CD8-positive, alpha-beta T cell (primary cell): ENCODE measurements at regions of chr11 and their contacts with region 1.

Region 1: DNA sequence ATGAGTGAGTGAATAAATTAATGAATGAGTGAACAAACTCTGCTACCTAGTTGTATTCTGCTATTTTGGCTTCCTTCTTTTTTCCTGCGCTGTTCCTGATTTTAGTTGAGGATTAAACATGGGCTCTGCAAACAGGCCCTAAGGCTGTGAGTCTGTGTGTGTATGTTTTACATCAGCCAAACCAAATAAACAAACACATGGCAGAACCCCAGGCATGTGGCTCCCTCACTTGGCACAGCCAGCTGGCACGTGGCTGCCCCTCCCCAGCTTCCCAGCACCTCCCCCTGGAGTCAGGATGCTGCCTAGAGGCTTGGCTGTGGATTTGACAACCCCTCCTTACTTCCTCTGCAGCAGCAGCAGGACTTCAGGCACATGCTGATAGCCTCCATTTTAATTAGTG is 593.2 kb downstream of the INSC start:
- DNase-seq: no peak
- ATAC-seq: no peak
- H3K4me3 ChIP-seq: no peak overlapping the region
- H3K4me3 Mint-ChIP-seq: no peak overlapping the region
- H3K27ac ChIP-seq: no peak overlapping the region
- H3K27ac Mint-ChIP-seq: no peak overlapping the region
- H3K4me1 ChIP-seq: no peaks in the 10 kb centered on the region
- H3K4me1 Mint-ChIP-seq: no peaks in the 10 kb centered on the region
- H3K27me3 ChIP-seq: no peaks in the 10 kb centered on the region
- H3K27me3 Mint-ChIP-seq: no peaks in the 10 kb centered on the region
- CTCF ChIP-seq: no peak

Region 2: DNA sequence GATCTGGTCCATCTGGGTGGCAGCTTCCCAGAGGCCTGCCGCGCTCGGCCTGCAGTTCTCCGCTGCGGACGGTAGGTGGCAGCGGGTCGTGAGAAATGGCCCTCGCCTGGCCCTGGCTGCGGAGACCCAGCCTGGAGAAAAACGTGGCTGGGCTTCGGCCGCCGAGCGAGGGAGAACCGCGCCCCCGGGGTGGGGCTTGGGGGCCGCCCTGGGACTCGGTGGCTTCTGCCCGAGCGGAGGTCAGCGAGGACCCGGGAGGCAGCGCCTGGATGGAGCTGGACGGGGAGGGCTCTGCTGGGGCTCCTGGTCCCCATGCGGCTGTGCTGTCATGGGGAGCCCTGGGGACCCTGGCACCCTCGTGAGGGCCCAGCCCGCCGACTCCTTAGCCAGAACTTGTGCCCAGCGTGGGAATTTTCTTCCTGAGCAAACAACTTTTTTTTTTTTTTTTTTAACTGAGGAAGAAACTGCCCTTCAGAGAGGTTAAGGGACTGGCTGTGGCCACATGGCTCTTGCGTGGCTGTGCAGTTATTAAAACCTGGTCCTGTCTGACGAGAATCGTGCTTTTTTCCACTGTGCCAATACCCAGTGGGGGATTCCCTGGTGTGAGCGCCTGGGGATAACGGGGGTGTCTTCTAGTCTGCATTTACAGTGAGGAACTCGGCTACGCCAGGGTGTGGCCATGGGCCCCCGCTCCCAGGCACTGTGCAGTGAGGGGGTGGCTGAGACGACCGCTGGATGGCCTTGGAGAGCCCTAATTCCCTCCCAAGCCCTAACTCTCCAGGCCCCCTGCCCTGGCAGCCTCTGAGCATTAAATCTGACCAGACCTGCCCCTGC is 57.6 kb before region 1 on chr11:
- CTCF ChIA-PET with region 1: no interaction called
- POLR2A ChIA-PET with region 1: no interaction called
- intact Hi-C with region 1: no loop called
- DNase-seq: peak; percentile 30 to 66 (median 53)
- ATAC-seq: peak; percentile 87
- H3K4me3 ChIP-seq: peak overlapping the region in 1 of 2 experiments; percentile 35
- H3K4me3 Mint-ChIP-seq: no peak overlapping the region
- H3K27ac ChIP-seq: no peak overlapping the region
- H3K27ac Mint-ChIP-seq: no peak overlapping the region
- H3K4me1 ChIP-seq: peaks cover 7% of the 10 kb centered on the region
- H3K4me1 Mint-ChIP-seq: peaks cover 2% of the 10 kb centered on the region
- H3K27me3 ChIP-seq: peaks cover 4 to 9% of the 10 kb centered on the region in 2 experiments
- H3K27me3 Mint-ChIP-seq: peaks cover 15% of the 10 kb centered on the region
- CTCF ChIP-seq: peak; percentile 62

Region 3: DNA sequence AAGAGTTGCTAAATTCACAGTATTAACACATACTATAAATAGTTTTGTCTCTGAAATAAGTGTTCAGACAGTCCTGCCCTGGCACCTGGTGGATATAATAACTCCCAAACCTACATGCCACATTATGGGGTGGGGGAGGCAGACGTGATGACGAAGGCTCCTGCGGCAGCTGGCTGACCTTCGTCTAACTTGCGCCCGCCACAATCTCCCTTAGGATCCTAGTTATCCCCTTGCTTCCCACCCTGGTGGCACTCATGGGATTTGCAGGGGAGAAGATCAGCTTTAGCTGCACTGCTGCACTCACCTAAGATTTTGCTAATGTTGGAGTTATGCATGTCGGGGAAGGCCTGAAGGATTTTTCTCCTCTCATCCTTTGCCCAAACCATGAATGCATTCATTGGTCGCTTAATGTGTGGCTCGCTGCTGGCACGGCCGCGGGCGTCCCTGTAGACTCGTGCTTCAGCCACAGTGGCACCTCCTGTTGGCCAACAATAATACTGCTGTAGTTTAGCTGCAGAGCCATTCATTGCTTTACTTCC is 280.8 kb after region 1 on chr11:
- CTCF ChIA-PET with region 1: no interaction called
- POLR2A ChIA-PET with region 1: no interaction called
- intact Hi-C with region 1: loop called in 1 of 2 experiments (anchors 10 kb)
- DNase-seq: no peak
- ATAC-seq: no peak
- H3K4me3 ChIP-seq: no peak overlapping the region
- H3K4me3 Mint-ChIP-seq: no peak overlapping the region
- H3K27ac ChIP-seq: no peak overlapping the region
- H3K27ac Mint-ChIP-seq: no peak overlapping the region
- H3K4me1 ChIP-seq: no peaks in the 10 kb centered on the region
- H3K4me1 Mint-ChIP-seq: no peaks in the 10 kb centered on the region
- H3K27me3 ChIP-seq: no peaks in the 10 kb centered on the region
- H3K27me3 Mint-ChIP-seq: no peaks in the 10 kb centered on the region
- CTCF ChIP-seq: no peak